Common myeloid progenitor, CD34-positive (primary cell): ENCODE measurements at regions of chr14 and their contacts with region 1.

Region 1: GRCh38 chr14:93655078-93655750 is 133.1 kb downstream of the PRIMA1 start:
- DNase-seq: peak; percentile 44 to 71 (median 59)
- H3K4me3 ChIP-seq: no peak overlapping the region
- H3K27ac ChIP-seq: no peak overlapping the region
- H3K4me1 ChIP-seq: no peaks in the 10 kb centered on the region
- H3K27me3 ChIP-seq: peaks cover 0 to 28% (median 4%) of the 10 kb centered on the region in 5 experiments

Region 2: GRCh38 chr14:93464271-93464670 is 190.9 kb before region 1 on chr14:
- CTCF ChIA-PET with region 1: no interaction called
- POLR2A ChIA-PET with region 1: no interaction called
- DNase-seq: peak; percentile 0 to 13 (median 1)
- H3K4me3 ChIP-seq: no peak overlapping the region
- H3K27ac ChIP-seq: no peak overlapping the region
- H3K4me1 ChIP-seq: no peaks in the 10 kb centered on the region
- H3K27me3 ChIP-seq: peaks cover 0 to 5% (median 0%) of the 10 kb centered on the region in 5 experiments

Region 3: GRCh38 chr14:93591506-93591905 is 63.7 kb before region 1 on chr14:
- CTCF ChIA-PET with region 1: no interaction called
- POLR2A ChIA-PET with region 1: no interaction called
- DNase-seq: no peak
- H3K4me3 ChIP-seq: no peak overlapping the region
- H3K27ac ChIP-seq: no peak overlapping the region
- H3K4me1 ChIP-seq: no peaks in the 10 kb centered on the region
- H3K27me3 ChIP-seq: peaks cover 0 to 6% (median 3%) of the 10 kb centered on the region in 5 experiments

Region 4: DNA sequence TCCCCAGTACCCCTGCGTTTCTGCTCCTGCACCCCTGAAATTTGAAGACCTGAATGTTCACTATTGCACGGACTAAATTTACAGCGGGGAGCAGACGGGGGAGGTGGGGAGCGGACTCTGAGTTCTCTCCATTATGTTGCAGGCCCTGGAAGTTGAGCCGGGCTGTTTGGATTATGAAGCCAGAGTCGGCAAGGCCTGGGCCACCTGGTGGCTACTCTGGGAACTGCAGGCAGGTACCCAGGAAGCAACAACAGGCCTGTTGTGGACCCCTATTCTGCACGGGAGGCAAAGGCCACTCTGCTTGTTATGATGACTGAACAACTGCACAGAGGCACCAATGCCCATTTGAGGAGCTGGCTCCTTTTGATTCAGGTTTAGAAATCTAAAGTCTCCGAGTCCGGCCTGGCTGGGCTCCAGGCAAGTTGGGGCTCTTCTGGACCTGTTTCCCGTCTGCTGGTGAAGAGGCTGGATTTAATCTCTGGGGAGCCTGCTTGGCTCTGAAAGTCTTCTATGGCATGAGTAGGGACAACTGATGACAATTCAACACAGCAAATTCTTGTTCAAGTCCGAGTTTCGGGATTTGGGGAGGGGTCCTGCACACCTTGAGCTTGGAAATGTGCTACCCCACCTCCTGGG is 237.8 kb after region 1 on chr14:
- CTCF ChIA-PET with region 1: interaction called, 55 read pairs
- POLR2A ChIA-PET with region 1: no interaction called
- DNase-seq: peak; percentile 40 to 67 (median 56)
- H3K4me3 ChIP-seq: no peak overlapping the region
- H3K27ac ChIP-seq: no peak overlapping the region
- H3K4me1 ChIP-seq: no peaks in the 10 kb centered on the region
- H3K27me3 ChIP-seq: peaks cover 0 to 14% (median 6%) of the 10 kb centered on the region in 5 experiments

Region 5: DNA sequence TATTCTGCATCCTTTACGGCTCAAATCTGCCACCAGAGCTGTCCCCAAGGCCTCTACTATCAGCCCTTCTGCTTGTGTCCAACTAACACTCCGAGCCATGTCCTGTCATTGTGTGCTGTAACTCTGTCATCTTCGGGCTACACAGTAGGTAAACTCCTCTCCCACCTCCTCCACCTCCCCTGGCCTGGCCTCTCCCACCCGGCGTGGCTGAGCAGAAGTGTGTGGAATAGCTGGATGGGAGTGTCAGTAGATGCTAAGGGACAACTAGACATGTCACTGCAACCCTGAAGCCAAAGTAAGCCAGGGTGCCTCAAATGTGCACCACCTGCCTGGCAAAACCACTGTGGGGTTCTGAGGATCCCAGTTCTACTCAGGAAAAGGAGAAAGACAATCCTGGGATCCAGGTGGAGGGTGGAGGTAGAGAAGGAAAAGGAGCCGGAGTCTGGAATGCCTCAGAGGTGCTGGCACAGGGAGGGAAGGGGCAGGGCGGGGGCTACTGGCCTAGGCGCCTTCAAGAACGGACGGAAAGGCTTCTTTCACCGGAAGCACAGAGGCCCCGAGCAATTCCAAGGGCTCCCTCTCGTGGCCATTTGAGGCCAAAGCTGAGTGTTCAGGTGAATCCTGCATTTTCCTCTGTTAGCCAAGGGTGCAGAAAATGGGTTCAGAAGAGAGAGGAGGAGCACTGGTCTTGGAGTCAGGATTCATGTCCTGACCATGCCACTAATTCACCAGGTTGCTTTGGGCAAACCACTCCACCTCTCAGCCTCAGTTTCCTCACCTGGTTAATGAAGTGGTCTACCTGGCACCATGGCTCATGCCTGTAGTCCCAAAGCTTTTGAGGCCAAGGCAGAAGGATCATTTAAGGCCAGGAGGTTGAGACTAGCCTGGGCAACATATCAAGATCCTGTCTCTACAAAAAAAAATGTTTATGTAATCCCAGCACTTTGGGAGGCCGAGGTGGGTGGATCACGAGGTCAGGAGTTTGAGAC is 251.4 kb after region 1 on chr14:
- CTCF ChIA-PET with region 1: interaction called, 13 read pairs
- POLR2A ChIA-PET with region 1: no interaction called
- DNase-seq: peak; percentile 17 to 46 (median 30)
- H3K4me3 ChIP-seq: no peak overlapping the region
- H3K27ac ChIP-seq: no peak overlapping the region
- H3K4me1 ChIP-seq: no peaks in the 10 kb centered on the region
- H3K27me3 ChIP-seq: peaks cover 0 to 10% (median 7%) of the 10 kb centered on the region in 5 experiments